CD14-positive monocyte (primary cell): ENCODE measurements at regions of chr17 and their contacts with region 1.

Region 1: GRCh38 chr17:73255671-73256181 is 6.0 kb downstream of the CPSF4L start:
- DNase-seq: peak; percentile 34 to 51 (median 51)
- H3K4me3 ChIP-seq: no peak overlapping the region
- H3K4me3 Mint-ChIP-seq: no peak overlapping the region
- H3K27ac ChIP-seq: no peak overlapping the region
- H3K27ac Mint-ChIP-seq: peak overlapping the region in 1 of 7 donors; percentile 63
- H3K4me1 ChIP-seq: no peaks in the 10 kb centered on the region
- H3K4me1 Mint-ChIP-seq: peaks cover 3% of the 10 kb centered on the region
- H3K27me3 ChIP-seq: no peaks in the 10 kb centered on the region
- H3K27me3 Mint-ChIP-seq: peaks cover 1 to 7% (median 2%) of the 10 kb centered on the region in 3 donors
- CTCF ChIP-seq: peak; percentile 99

Region 2: GRCh38 chr17:73142872-73143381 is 112.8 kb before region 1 on chr17:
- intact Hi-C with region 1: no loop called
- DNase-seq: peak; percentile 91 to 97 (median 97)
- H3K4me3 ChIP-seq: peak overlapping the region in 1 of 3 experiments; percentile 58
- H3K4me3 Mint-ChIP-seq: peak overlapping the region; percentile 4 to 74
- H3K27ac ChIP-seq: peak overlapping the region; percentile 75 to 96
- H3K27ac Mint-ChIP-seq: peak overlapping the region; percentile 93 to 99 (median 95)
- H3K4me1 ChIP-seq: peaks cover 45 to 64% of the 10 kb centered on the region in 2 donors
- H3K4me1 Mint-ChIP-seq: peaks cover 53% of the 10 kb centered on the region
- H3K27me3 ChIP-seq: no peaks in the 10 kb centered on the region
- H3K27me3 Mint-ChIP-seq: peaks cover 0 to 3% (median 2%) of the 10 kb centered on the region in 3 donors
- CTCF ChIP-seq: no peak

Region 3: DNA sequence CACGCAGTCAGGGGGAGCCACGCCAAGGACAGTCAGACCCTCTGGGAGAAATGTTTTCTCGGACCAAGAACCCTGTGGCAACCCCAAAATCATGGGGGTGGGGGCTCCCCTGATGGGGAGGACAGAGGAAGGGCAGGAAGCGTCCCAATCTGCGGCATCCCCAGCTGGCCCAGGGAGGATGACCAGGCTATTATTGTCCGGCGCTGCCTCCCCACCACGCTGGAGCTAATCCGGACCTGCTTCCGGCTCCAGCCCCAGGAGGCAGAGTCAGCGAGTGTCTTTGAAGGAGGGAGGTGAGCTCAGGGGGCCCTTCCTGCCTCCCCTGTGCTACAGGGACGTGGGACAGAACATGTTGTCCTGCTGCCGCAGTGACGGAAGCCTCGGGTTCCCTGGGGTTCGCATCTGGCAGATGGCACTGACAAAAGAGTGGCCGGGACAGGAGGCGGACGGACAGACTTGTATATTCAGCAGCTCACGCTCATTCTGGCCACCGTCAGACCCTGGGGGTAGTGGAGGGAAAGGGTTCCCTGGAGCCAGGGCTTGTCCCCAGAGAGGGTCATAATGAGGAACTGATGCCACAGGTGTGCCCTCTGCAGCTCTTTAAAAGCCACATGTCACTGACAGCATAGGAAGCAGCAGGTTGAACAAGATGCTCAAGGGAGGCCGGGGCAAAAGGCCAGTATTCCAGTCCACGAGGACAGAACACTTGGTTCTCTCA is 110.3 kb after region 1 on chr17:
- intact Hi-C with region 1: loop called (anchors 1 kb)
- DNase-seq: no peak
- H3K4me3 ChIP-seq: no peak overlapping the region
- H3K4me3 Mint-ChIP-seq: no peak overlapping the region
- H3K27ac ChIP-seq: no peak overlapping the region
- H3K27ac Mint-ChIP-seq: no peak overlapping the region
- H3K4me1 ChIP-seq: peaks cover 0 to under 1% of the 10 kb centered on the region in 2 donors
- H3K4me1 Mint-ChIP-seq: peaks cover 8% of the 10 kb centered on the region
- H3K27me3 ChIP-seq: no peaks in the 10 kb centered on the region
- H3K27me3 Mint-ChIP-seq: peaks cover under 1 to 9% (median 1%) of the 10 kb centered on the region in 3 donors
- CTCF ChIP-seq: no peak